HepG2 (cell line): ENCODE measurements at regions of chr1 and their contacts with region 1.

Region 1: DNA sequence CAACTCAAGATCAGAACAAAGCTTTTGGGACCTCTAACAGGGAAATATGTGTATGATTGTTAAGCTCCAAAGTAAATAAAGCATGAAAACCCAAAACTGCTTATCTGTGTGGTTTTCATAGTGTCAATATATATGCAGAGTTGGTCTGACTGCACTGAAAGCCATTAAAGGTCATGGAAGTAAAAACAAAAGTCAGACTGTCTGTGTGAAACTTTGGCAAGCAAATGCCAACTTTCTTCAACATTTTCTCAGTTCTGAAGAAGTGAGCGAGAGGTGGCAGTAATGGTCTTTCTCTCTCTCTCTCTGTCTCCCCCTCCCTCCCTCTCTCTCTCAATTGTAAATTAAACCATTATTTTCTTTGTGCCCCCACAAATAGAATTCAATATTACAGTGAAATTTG is 100.1 kb upstream of the S1PR1 start:
- DNase-seq: peak; percentile 73
- ATAC-seq: peak; percentile 85
- H3K4me3 ChIP-seq: peak overlapping the region in 1 of 3 experiments; percentile 30; a peak in 2 of 6 replicates
- H3K27ac ChIP-seq: peak overlapping the region; percentile 71
- H3K4me1 ChIP-seq: peaks cover 59% of the 10 kb centered on the region
- H3K27me3 ChIP-seq: 0 out of 5 replicates have a peak, but pooled peaks cover 0 to 1% of the 10 kb centered on the region in 2 experiments
- CTCF ChIP-seq: peak; percentile 64
- EP300 ChIP-seq: peak in 1 of 2 experiments; percentile 83; a peak in 2 of 4 replicates
- POLR2A ChIP-seq: no peak
- RAD21 ChIP-seq: no peak

Region 2: DNA sequence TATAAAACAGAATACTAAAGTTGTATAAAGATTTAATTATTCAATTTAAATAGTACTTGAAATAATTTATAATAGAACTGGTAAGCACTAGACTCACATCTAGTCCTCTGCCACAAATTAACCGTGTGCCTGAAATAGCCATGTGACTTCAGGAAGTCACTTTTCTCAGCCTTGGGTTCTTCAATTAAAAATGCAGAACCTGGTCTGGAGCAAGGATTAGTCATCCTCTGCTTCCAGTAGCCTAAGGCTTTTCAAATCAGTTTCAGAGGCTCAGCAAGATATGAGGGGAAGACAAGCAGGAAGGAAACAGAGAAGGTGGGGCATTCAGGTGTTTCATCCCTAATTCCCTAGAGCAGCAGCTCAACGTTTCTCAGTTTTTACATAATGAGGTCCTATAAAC is 134.2 kb before region 1 on chr1:
- CTCF ChIA-PET with region 1: no interaction called
- POLR2A ChIA-PET with region 1: no interaction called
- in situ Hi-C with region 1: no loop called
- intact Hi-C with region 1: loop called (anchors 10 kb)
- DNase-seq: no peak
- ATAC-seq: no peak
- H3K4me3 ChIP-seq: no peak overlapping the region
- H3K27ac ChIP-seq: no peak overlapping the region
- H3K4me1 ChIP-seq: peaks cover 49% of the 10 kb centered on the region
- H3K27me3 ChIP-seq: no peaks in the 10 kb centered on the region
- CTCF ChIP-seq: no peak
- EP300 ChIP-seq: no peak
- POLR2A ChIP-seq: no peak
- RAD21 ChIP-seq: no peak

Region 3: DNA sequence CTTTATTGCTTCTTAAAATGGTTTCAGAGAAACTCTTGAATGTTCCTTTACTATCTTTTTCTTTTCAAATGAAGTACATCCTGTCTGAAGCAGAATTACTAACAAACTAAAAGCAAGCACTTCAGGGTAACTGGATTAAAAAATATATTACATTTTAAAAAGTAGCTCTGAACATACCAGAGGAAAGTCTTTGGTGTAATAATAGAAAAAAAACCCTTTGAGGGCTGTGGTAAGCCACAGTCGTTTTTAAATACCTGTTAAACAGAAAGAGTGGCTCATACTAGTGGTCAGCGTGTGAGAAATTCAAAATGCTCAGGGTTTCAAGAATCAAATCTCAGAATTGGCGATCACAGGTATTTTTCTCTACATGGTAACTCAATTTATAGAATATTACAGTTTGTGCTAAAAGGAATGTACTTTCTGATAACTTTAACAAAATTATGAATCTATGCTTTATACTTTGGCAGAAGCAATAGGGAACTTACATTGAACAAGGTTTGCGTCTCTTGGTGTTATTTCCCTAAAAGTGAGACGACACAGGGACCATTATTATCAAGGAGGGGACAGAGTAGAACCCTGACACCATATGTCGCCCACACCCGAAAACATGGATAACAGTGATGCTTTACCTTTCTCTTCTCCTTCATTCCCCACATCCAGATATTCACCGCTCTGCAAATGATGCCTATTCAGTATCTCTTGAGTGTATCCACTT is 14.1 kb before region 1 on chr1:
- CTCF ChIA-PET with region 1: no interaction called
- POLR2A ChIA-PET with region 1: no interaction called
- in situ Hi-C with region 1: no loop called
- intact Hi-C with region 1: no loop called
- DNase-seq: no peak
- ATAC-seq: no peak
- H3K4me3 ChIP-seq: no peak overlapping the region
- H3K27ac ChIP-seq: no peak overlapping the region
- H3K4me1 ChIP-seq: 0 out of 2 replicates have a peak, but pooled peaks cover 3% of the 10 kb centered on the region
- H3K27me3 ChIP-seq: no peaks in the 10 kb centered on the region
- CTCF ChIP-seq: no peak
- EP300 ChIP-seq: no peak
- POLR2A ChIP-seq: no peak
- RAD21 ChIP-seq: no peak

Region 4: DNA sequence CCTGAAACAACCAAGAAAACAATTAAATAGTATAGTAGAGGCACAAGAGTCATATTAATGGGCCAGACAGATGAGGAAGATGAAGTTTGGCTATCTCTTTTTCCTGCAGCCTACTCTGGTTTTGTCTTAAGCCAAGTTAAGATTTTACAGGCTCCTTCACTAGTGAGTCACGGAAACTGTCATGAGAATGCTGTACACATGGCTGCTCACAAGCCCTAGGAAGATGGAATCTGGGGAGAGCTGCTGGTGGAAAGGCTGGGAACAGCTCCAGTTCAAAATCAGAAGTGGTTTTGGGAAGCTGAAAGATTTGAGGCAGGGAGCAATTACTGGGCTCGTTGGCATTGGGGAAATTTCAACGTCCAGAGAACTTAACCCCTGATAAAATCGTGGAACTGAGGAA is 53.7 kb after region 1 on chr1:
- CTCF ChIA-PET with region 1: no interaction called
- POLR2A ChIA-PET with region 1: no interaction called
- in situ Hi-C with region 1: no loop called
- intact Hi-C with region 1: no loop called
- DNase-seq: no peak
- ATAC-seq: no peak
- H3K4me3 ChIP-seq: no peak overlapping the region
- H3K27ac ChIP-seq: no peak overlapping the region
- H3K4me1 ChIP-seq: peaks cover 15% of the 10 kb centered on the region
- H3K27me3 ChIP-seq: no peaks in the 10 kb centered on the region
- CTCF ChIP-seq: no peak
- EP300 ChIP-seq: no peak
- POLR2A ChIP-seq: no peak
- RAD21 ChIP-seq: no peak